HEK293 (cell line): ENCODE measurements at regions of chr7 and their contacts with region 1.

Region 1: DNA sequence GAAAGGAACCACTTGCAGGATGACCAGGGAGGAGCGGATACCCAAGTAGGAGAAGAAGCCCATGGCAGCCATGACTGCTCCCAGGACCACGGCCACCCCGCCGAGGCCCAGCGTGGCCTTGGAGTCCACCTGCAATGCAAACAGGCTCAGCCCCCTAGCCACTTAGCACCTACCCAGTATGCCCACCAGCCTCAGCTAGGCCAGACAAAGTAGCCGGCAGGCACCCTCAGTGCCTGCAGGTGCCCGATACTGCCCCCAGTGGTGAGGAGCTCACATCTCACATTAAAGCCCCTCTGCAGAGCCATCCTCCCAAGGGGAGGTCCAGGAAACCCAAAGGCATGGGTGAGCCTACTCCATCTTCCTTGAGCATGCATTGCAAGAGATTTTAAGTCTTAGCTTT is 6.6 kb downstream of the NPC1L1 start:
- H3K4me3 ChIP-seq: no peak overlapping the region
- H3K27ac ChIP-seq: no peak overlapping the region
- H3K4me1 ChIP-seq: no peaks in the 10 kb centered on the region
- CTCF ChIP-seq: peak; percentile 57

Region 2: DNA sequence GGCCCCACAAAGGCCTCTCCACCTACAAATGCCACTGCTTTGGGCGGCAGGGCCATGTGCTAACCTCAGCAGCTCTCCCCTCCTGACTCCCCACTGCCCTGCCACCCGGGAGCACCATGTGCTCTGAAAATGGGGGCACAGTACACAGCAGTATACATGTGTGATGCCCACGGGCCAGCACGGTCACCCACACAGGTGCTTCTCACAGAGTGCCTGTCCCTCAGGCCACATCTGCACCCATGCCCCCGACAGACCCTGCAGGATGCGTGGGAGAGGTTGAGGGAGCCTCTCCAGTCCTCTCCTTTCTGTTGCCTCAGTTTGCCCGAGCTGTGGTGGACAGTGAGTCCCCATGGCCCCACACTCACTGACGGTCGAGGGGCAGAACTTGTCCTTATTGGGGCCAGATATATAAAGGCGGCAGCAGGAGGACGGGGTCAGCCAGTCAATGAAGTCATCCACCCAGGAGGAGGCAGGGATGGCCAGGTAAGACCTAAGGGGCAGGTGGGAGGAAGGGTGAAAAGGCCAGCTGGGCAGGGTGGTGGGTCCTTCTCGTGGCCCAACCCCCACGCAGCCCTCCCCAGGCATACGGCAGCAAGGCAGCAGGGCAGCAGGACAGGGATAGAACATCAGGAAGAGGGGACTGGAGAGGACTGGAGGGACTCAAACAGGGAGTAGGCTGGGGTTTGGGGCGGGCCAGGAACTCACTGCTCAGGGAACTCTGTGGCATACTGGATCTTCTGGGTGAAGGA is 13.0 kb before region 1 on chr7:
- CTCF ChIA-PET with region 1: interaction called, 16 read pairs
- POLR2A ChIA-PET with region 1: no interaction called
- H3K4me3 ChIP-seq: no peak overlapping the region
- H3K27ac ChIP-seq: no peak overlapping the region
- H3K4me1 ChIP-seq: no peaks in the 10 kb centered on the region
- CTCF ChIP-seq: no peak

Region 3: DNA sequence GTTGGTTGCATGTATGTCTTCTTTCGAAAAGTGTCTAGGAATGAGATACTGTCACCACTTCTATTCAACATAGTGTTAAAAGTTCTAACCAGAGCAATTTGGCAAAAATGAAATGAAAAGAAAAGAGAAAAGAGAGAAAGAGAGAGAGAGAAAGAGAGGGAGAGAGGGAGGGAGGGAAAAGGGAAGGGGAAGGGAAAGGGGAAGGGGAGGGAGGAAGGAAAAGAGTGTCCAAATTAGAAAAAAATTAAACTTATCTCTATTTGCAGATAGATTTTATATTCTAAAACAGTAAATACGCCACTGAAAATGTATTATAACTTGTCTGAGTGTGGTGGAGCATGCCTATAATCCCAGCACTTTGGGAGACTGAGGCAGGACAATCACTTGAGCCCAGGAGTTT is 23.0 kb after region 1 on chr7:
- CTCF ChIA-PET with region 1: interaction called, 10 read pairs
- POLR2A ChIA-PET with region 1: interaction called, 3 read pairs
- H3K4me3 ChIP-seq: no peak overlapping the region
- H3K27ac ChIP-seq: no peak overlapping the region
- H3K4me1 ChIP-seq: no peaks in the 10 kb centered on the region
- CTCF ChIP-seq: no peak